ENCODE measurements at regions of chr17 and their contacts with region 1.

Region 1: GRCh38 chr17:76893623-76894334 is 25.6 kb downstream of the MGAT5B start:
- DNase-seq: no peak
- H3K4me3 ChIP-seq: no peak overlapping the region
- H3K27ac ChIP-seq: no peak overlapping the region
- H3K4me1 ChIP-seq: no peaks in the 10 kb centered on the region
- H3K27me3 ChIP-seq: no peaks in the 10 kb centered on the region
- CTCF ChIP-seq: no peak

Region 2: GRCh38 chr17:76969598-76970172 is 75.9 kb after region 1 on chr17:
- CTCF ChIA-PET with region 1: no interaction called
- dilution Hi-C with region 1: loop called (anchors 10 kb)
- in situ Hi-C with region 1: no loop called
- intact Hi-C with region 1: no loop called
- DNase-seq: no peak
- H3K4me3 ChIP-seq: no peak overlapping the region
- H3K27ac ChIP-seq: no peak overlapping the region
- H3K4me1 ChIP-seq: peaks cover 6% of the 10 kb centered on the region
- H3K27me3 ChIP-seq: peaks cover 21% of the 10 kb centered on the region
- CTCF ChIP-seq: no peak